ENCODE measurements at regions of chr5 and their contacts with region 1.

Region 1: DNA sequence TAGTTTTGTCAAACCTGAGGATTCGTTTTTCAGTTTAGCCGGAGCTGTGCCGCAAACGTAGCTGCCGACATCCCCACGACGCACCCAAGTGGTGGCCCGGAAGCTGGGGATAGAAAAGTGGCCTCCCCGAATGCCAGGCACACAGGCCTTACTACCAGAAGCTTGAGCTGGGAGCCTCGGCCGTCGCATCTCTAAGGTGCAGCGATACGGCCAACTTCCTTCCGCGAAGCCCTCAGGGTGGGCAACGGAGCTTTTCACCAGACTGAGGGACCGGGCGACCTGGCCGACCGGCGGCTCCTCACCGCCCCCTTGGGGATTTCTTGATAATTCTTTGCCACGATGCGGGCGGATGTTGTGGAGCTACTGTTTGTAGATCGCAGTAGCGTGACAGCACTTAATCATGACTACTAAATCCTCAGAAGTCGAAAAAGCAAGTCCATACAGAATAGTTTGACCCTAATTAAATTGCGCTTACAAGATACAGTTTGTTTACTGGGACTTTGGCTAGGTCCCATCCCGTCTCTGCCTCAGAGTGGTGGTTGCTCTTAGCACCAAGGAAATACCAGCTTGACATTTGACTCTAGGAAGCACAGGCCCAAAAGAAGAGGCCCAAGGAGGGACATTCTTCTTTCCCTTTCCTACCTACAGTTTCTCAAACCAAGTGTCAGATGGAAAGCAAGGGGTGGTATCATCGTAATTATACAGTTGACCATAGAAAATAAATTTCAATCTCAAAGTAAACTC is 613 bp upstream of the TMEM267 start:
- DNase-seq: peak; percentile 29
- H3K4me3 ChIP-seq: peak overlapping the region; percentile 81
- CTCF ChIP-seq: peak; percentile 70

Region 2: GRCh38 chr5:43401827-43402226 is 82.5 kb before region 1 on chr5:
- CTCF ChIA-PET with region 1: interaction called, 25 read pairs
- POLR2A ChIA-PET with region 1: no interaction called
- DNase-seq: no peak
- H3K4me3 ChIP-seq: no peak overlapping the region
- CTCF ChIP-seq: peak; percentile 25

Region 3: GRCh38 chr5:43497311-43498104 is 13.2 kb after region 1 on chr5:
- CTCF ChIA-PET with region 1: interaction called, 27 read pairs
- POLR2A ChIA-PET with region 1: no interaction called
- DNase-seq: no peak
- H3K4me3 ChIP-seq: no peak overlapping the region
- CTCF ChIP-seq: no peak

Region 4: GRCh38 chr5:43514816-43515677 is 30.8 kb after region 1 on chr5 and contains the start of gene C5orf34:
- CTCF ChIA-PET with region 1: interaction called, 5 read pairs
- POLR2A ChIA-PET with region 1: interaction called, 15 read pairs
- DNase-seq: peak; percentile 70
- H3K4me3 ChIP-seq: peak within 1 kb of the TSS; percentile 80
- CTCF ChIP-seq: no peak

Measured in AG04449 (cell line).